AG04450 (cell line): ENCODE measurements at regions of chr11 and their contacts with region 1.

Region 1: GRCh38 chr11:96162816-96163499 is 180.0 kb downstream of the MAML2 start:
- DNase-seq: peak; percentile 76
- H3K4me3 ChIP-seq: peak overlapping the region; percentile 10; the same call in 1 of the 2 replicates
- H3K27ac ChIP-seq: peak overlapping the region; percentile 87
- H3K27me3 ChIP-seq: no peaks in the 10 kb centered on the region
- CTCF ChIP-seq: no peak

Region 2: DNA sequence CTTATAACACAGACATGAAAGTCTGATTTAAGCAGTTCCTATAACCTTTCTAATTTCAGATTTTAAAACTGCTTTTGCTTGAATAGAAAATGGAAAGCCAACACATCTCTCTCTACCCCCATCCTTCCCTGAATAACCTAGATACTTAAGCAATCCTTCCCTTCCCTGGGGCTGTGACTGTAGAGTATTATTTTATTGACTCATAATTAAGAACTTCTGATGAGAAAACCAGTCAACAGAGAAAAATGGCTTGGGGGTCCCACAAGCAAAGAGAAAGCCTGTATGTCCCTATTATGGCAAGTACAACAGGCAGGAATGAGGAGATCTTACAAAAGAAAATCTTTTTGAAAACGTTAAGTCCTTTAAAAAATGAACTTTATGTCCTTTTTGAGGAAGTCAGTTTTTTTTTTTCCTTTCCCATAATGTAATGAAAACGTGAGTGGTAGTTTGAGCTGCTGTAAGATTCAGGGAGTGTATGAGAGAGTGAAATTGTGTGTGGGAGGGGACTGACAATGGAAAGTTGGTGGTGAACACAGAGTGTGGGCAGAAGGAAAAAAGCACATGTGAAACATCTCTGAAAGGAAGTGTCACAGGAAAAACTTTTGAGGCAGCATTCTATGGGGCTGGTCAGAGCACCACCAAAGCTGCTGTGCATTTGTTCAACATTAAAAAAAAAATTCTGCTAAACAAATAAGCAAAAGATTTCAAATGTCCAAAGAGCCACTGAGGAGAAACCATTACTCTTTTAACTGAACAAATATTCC is 25.5 kb after region 1 on chr11:
- CTCF ChIA-PET with region 1: no interaction called
- POLR2A ChIA-PET with region 1: interaction called, 12 read pairs
- DNase-seq: no peak
- H3K4me3 ChIP-seq: no peak overlapping the region
- H3K27ac ChIP-seq: peak overlapping the region; percentile 69
- H3K27me3 ChIP-seq: no peaks in the 10 kb centered on the region
- CTCF ChIP-seq: no peak